ENCODE measurements at regions of chr1 and their contacts with region 1.

Region 1: GRCh38 chr1:35715568-35716002 is 3.1 kb downstream of the C1orf216 start:
- DNase-seq: peak; percentile 90
- H3K4me3 ChIP-seq: peak overlapping the region in 1 of 8 donors; percentile 35
- H3K27ac ChIP-seq: no peak overlapping the region
- H3K4me1 ChIP-seq: peaks cover 9 to 50% (median 35%) of the 10 kb centered on the region in 6 donors
- H3K27me3 ChIP-seq: no peaks in the 10 kb centered on the region
- CTCF ChIP-seq: peak; percentile 41 to 88 (median 79)
- POLR2A ChIP-seq: no peak

Region 2: DNA sequence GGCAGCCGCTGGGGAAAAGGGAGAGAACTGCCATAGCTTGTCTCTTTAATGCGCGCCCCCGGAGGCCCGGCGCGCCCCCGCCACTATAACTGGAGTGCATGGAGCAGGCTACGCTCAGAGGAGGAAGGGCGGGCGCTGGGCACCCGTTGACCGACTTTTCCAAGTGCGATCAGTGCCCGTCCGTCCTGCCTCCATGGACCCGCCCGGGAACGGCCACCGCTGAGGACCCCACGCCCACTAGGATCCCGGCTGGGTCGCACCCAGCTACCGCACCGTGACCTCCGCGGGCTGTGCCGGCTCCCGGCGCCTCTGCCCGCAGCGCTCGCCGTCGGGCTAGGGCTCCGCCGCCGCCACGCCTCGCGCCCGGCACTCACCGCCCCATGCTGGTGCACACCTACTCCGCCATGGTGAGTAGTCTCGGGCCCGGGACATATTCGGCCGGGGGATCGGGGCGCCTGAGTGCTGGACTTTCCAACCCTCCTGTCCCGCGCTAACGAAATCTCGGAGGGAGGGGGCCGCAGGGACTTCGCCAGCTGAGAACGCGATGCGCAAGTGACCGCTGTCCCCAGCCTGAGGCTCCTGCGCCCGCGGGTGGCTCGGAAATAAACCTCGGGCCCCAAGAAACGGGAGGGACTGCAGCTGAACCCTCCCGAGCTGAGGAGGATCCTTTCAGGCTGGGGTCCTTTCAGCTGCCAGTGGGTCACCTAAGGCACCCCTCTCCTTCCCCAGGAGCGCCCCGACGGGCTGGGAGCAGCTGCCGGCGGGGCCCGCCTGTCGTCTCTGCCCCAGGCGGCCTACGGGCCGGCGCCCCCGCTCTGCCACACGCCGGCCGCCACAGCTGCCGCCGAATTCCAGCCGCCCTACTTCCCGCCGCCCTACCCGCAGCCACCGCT is 142.1 kb before region 1 on chr1 and contains the start of gene TFAP2E:
- intact Hi-C with region 1: loop called (anchors 5 kb)
- DNase-seq: peak; percentile 76
- H3K4me3 ChIP-seq: peak within 1 kb of the TSS; percentile 20 to 68 (median 36)
- H3K27ac ChIP-seq: no peak within 1 kb of the TSS
- H3K4me1 ChIP-seq: peaks cover 5 to 65% (median 39%) of the 10 kb centered on the region in 6 donors
- H3K27me3 ChIP-seq: peaks cover 0 to 50% (median 36%) of the 10 kb centered on the region in 7 donors
- CTCF ChIP-seq: no peak
- POLR2A ChIP-seq: no peak
- total RNA-seq, gene TFAP2E: 0.60 to 2.9 (median 1.7) TPM in 5 of 7 donors, not detected in the others

Region 3: GRCh38 chr1:36134505-36135329 is 419.1 kb after region 1 on chr1:
- intact Hi-C with region 1: no loop called
- DNase-seq: no peak
- H3K4me3 ChIP-seq: no peak overlapping the region
- H3K27ac ChIP-seq: peak overlapping the region in 5 of 8 donors; percentile 0 to 62 (median 31)
- H3K4me1 ChIP-seq: peaks cover 2 to 35% (median 19%) of the 10 kb centered on the region in 6 donors
- H3K27me3 ChIP-seq: no peaks in the 10 kb centered on the region
- CTCF ChIP-seq: peak in 10 of 11 experiments; percentile 35 to 79 (median 64)
- POLR2A ChIP-seq: no peak